HepG2 (cell line): ENCODE measurements at regions of chr3 and their contacts with region 1.

Region 1: GRCh38 chr3:9731206-9732079 is at the start of gene BRPF1:
- DNase-seq: peak; percentile 95
- ATAC-seq: peak; percentile 95
- H3K4me3 ChIP-seq: peak within 1 kb of the TSS; percentile 89 to 99 (median 96)
- H3K27ac ChIP-seq: peak within 1 kb of the TSS; percentile 99
- H3K4me1 ChIP-seq: peaks cover 31% of the 10 kb centered on the region
- H3K27me3 ChIP-seq: no peaks in the 10 kb centered on the region; a peak in 1 of 5 replicates
- CTCF ChIP-seq: peak; percentile 43
- EP300 ChIP-seq: peak in 1 of 2 experiments; percentile 42; a peak in 1 of 4 replicates
- POLR2A ChIP-seq: peak; percentile 55 to 71
- RAD21 ChIP-seq: 0 out of 2 replicates have a peak, but pooled peaks have one; percentile 35
- total RNA-seq, gene BRPF1: 7.5 and 10.0 TPM in 2 replicates

Region 2: GRCh38 chr3:9503283-9503682 is 228.2 kb before region 1 on chr3:
- CTCF ChIA-PET with region 1: interaction called, 5 read pairs
- POLR2A ChIA-PET with region 1: no interaction called
- in situ Hi-C with region 1: loop called (anchors 5 kb)
- intact Hi-C with region 1: loop called (anchors 2 kb)
- DNase-seq: peak; percentile 72
- ATAC-seq: peak; percentile 31
- H3K4me3 ChIP-seq: no peak overlapping the region
- H3K27ac ChIP-seq: no peak overlapping the region
- H3K4me1 ChIP-seq: peaks cover 8% of the 10 kb centered on the region
- H3K27me3 ChIP-seq: peaks cover 2 to 36% of the 10 kb centered on the region in 2 experiments; a peak in 3 of 5 replicates
- CTCF ChIP-seq: peak; percentile 88
- EP300 ChIP-seq: no peak
- POLR2A ChIP-seq: no peak
- RAD21 ChIP-seq: peak; percentile 74

Region 3: DNA sequence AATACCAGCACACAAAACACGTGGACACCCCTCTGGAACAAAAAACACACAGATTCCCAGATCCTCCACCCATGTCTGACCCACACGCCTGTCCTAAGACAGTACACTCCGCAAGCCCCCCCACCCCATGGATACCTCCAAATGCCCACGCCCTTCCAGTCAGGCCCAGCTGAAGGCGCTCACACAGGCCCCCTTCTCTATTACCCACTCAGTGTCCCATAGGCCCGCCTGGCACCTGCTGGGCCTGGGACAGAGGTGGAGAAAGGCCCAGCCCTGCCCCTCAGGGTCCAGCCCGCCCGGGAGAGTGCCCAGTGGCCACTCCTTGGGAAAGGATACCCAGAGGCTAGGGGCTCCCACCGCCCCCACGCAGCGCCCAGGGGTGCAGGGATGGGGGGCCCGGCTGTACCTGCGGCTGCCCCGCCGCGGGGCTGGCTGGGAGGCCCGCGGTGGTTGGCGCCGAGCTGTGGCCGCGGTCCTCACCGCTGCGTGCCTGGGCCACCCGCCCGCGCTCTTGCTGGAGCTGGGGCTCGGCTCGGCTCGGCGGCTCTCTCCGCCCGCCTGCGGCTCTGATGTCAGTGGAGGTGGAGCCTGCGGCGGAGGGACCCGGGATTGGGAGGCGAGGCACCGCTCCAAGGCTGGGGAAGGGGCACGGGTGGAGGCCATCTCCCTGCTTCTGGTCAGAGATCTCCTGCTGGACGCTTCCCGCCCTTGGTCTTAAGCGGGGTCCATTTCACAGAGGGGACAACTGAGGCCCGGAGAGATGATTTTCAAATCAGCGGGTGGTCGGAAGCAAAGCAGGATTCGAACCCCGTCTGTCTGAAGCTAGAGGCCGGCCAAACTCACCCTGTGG is 38.2 kb after region 1 on chr3 and contains the start of gene CAMK1:
- CTCF ChIA-PET with region 1: no interaction called
- POLR2A ChIA-PET with region 1: interaction called, 10 read pairs
- in situ Hi-C with region 1: no loop called
- intact Hi-C with region 1: no loop called
- DNase-seq: peak; percentile 45
- ATAC-seq: peak; percentile 91
- H3K4me3 ChIP-seq: peak within 1 kb of the TSS; percentile 68 to 92 (median 76)
- H3K27ac ChIP-seq: peak within 1 kb of the TSS; percentile 57
- H3K4me1 ChIP-seq: peaks cover 39% of the 10 kb centered on the region
- H3K27me3 ChIP-seq: no peaks in the 10 kb centered on the region; a peak in 1 of 5 replicates
- CTCF ChIP-seq: no peak; the same call in 1 of the 2 replicates
- EP300 ChIP-seq: no peak
- POLR2A ChIP-seq: peak in 1 of 2 experiments; percentile 79; a peak in 2 of 4 replicates
- RAD21 ChIP-seq: 0 out of 2 replicates have a peak, but pooled peaks have one; percentile 12
- total RNA-seq, gene CAMK1: 51.8 and 53.3 TPM in 2 replicates